ENCODE measurements at regions of chr15 and their contacts with region 1.

Region 1: DNA sequence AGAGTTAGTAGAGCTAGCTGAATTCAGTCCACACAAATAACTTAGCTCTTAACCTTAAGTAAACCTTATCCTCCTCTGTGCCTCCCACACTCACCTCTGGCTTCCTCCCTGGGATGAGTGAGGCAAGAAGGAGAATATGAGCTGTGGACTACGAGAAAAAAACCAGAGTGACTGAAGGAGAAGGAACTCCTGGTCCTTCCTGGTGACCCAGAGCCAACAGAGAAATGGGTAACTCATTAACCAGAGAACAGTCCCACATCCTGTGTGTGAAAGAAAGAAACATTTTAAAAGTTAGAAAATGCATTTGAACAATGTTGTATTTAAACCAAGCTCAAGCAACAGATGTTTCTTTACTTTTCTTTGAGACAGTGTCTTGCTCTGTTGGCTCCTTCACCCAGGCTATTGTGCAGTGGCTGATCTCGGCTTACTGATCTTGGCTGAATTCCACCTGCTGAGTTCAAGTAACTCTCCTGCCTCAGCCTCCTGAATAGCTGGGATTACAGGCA is 27.5 kb upstream of the FAM81A start:
- DNase-seq: no peak
- ATAC-seq: no peak
- H3K4me3 Mint-ChIP-seq: peak overlapping the region; percentile 73
- H3K27ac Mint-ChIP-seq: peak overlapping the region; percentile 98
- H3K4me1 Mint-ChIP-seq: peaks cover 84% of the 10 kb centered on the region
- H3K27me3 Mint-ChIP-seq: no peaks in the 10 kb centered on the region
- CTCF ChIP-seq: no peak

Region 2: GRCh38 chr15:58632789-58633188 is 777.7 kb before region 1 on chr15:
- CTCF ChIA-PET with region 1: no interaction called
- POLR2A ChIA-PET with region 1: no interaction called
- intact Hi-C with region 1: no loop called
- DNase-seq: no peak
- ATAC-seq: no peak
- H3K4me3 Mint-ChIP-seq: no peak overlapping the region
- H3K27ac Mint-ChIP-seq: no peak overlapping the region
- H3K4me1 Mint-ChIP-seq: peaks cover 16% of the 10 kb centered on the region
- H3K27me3 Mint-ChIP-seq: no peaks in the 10 kb centered on the region
- CTCF ChIP-seq: no peak

Region 3: DNA sequence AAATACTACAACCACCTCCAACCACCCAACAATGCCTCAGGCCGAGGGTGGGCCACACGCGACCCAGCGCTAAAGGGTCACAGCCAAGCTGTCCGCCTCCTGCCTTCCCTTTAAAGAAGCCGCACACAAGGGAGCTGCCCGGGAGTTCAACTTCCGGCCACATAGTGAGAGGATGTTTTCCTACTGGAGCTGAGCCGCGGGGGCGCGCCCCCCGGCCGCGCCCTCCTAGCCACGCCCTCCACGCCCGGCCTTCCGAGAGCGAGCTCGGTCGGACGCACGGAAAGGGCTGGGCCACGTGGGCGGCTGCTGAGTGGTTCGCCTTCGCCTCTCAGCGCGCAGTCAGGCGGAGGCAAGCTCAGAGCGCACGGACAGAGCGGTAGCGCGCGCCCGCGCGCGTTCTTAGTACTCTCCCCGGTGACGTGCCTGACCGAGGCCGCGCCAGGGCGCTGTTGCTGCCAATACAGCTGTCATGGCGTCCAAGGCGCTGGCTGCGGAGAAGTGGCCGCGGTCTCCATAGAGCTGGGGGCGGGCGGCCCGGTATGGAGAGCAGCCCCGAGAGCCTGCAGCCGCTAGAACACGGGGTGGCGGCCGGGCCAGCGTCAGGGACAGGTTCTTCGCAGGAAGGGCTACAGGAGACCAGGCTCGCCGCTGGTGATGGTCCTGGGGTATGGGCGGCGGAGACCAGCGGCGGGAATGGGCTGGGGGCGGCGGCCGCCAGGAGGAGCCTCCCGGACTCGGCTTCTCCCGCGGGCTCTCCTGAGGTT is 639.4 kb before region 1 on chr15 and contains the start of gene MINDY2:
- CTCF ChIA-PET with region 1: no interaction called
- POLR2A ChIA-PET with region 1: no interaction called
- intact Hi-C with region 1: loop called (anchors 10 kb)
- DNase-seq: peak; percentile 89
- ATAC-seq: peak; percentile 94
- H3K4me3 Mint-ChIP-seq: peak within 1 kb of the TSS; percentile 93
- H3K27ac Mint-ChIP-seq: peak within 1 kb of the TSS; percentile 96
- H3K4me1 Mint-ChIP-seq: peaks cover 6% of the 10 kb centered on the region
- H3K27me3 Mint-ChIP-seq: no peaks in the 10 kb centered on the region
- CTCF ChIP-seq: no peak
- total RNA-seq, gene MINDY2: 5.8 and 6.2 TPM in 2 replicates

Region 4: DNA sequence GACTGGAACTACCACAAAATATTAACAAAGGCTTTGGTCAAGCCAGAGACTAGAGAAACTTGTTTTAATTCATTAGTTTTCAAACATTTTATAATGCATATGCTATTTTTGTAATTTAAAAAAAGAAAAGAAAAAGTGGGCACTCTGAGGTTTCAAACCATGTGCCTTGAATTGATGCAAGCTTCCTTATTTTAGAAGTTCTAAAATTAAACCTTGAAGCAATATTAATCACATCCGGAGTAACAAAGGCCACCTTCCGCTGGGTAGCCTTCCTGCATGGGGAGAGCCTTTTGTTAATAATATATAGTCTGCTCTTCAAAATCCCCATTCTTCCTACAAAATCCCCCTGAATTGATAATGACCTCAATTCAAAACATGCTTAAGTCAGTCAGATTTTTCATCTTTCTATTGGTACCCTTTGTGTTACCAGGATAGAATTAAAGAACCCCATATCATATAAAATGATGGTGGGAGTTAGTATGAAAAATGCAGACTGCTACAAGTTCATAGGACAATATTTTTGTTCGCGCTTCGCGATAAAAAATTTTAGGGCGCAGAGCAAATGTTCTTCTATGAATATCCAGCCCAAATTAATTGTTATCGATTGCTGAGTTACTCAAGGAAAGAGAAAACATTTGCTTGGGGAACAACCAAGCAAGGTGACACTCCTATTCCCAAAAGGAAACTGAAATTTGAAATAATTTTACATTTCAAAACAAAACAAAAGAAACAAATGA is 173.2 kb before region 1 on chr15:
- CTCF ChIA-PET with region 1: interaction called, 5 read pairs
- POLR2A ChIA-PET with region 1: interaction called, 5 read pairs
- intact Hi-C with region 1: loop called (anchors 1 kb)
- DNase-seq: no peak
- ATAC-seq: peak; percentile 84
- H3K4me3 Mint-ChIP-seq: peak overlapping the region; percentile 48
- H3K27ac Mint-ChIP-seq: peak overlapping the region; percentile 88
- H3K4me1 Mint-ChIP-seq: peaks cover 46% of the 10 kb centered on the region
- H3K27me3 Mint-ChIP-seq: no peaks in the 10 kb centered on the region
- CTCF ChIP-seq: no peak

Region 5: DNA sequence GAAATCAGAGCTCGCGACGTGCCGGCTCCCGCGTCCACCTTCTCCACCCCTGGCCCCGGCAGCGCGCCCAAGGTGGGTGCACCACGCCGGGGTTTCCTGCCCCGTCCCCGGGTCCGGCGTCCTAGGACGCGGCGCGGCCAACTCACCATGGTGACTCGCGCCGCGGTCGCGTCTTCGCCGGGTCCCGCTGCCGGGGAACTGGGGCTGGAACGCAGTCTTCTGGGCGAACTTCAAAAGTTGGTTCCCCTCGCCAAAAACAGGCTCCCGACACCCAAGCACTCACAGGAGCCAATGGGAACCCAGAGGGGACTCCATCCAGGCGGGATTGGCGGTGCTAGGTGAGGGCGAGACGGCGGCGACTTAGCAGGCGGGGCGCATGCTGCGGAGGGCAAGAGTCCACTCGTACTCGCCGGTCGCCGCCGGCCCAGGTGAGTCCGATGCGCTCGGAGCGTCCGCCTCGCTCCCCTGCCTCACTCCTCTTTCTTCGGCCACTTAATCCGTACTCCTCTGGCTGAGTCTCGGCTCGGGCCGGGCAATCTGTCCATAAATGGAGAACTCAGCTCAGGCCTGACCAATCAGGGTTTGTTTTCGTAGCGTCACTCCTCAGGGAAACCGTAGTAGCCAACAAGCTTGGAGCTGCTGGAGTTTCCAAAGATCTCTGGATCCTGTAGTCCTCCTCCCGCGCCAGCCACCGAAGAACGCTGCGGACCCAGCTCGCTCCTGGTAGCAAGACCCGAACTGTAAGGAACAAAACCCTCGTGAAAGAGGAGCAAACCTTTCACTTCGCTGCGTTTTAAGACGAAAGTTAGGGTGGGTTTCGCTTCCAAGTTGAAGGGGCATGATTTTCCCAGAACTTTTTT is 37.9 kb before region 1 on chr15 and contains the start of gene MYO1E:
- CTCF ChIA-PET with region 1: interaction called, 11 read pairs
- POLR2A ChIA-PET with region 1: interaction called, 23 read pairs
- intact Hi-C with region 1: loop called (anchors 1 kb)
- DNase-seq: peak; percentile 54
- ATAC-seq: peak; percentile 62
- H3K4me3 Mint-ChIP-seq: peak within 1 kb of the TSS; percentile 96
- H3K27ac Mint-ChIP-seq: peak within 1 kb of the TSS; percentile 89
- H3K4me1 Mint-ChIP-seq: peaks cover 64% of the 10 kb centered on the region
- H3K27me3 Mint-ChIP-seq: no peaks in the 10 kb centered on the region
- CTCF ChIP-seq: no peak
- total RNA-seq, gene MYO1E: 185 and 186 TPM in 2 replicates

Region 6: GRCh38 chr15:59420986-59421618 is 10.7 kb after region 1 on chr15:
- CTCF ChIA-PET with region 1: interaction called, 4 read pairs
- POLR2A ChIA-PET with region 1: interaction called, 14 read pairs
- intact Hi-C with region 1: no loop called
- DNase-seq: no peak
- ATAC-seq: no peak
- H3K4me3 Mint-ChIP-seq: no peak overlapping the region
- H3K27ac Mint-ChIP-seq: no peak overlapping the region
- H3K4me1 Mint-ChIP-seq: peaks cover 57% of the 10 kb centered on the region
- H3K27me3 Mint-ChIP-seq: no peaks in the 10 kb centered on the region
- CTCF ChIP-seq: no peak

Region 7: GRCh38 chr15:59484399-59484798 is 74.0 kb after region 1 on chr15:
- CTCF ChIA-PET with region 1: interaction called, 6 read pairs
- POLR2A ChIA-PET with region 1: interaction called, 12 read pairs
- intact Hi-C with region 1: loop called (anchors 1 kb)
- DNase-seq: no peak
- ATAC-seq: no peak
- H3K4me3 Mint-ChIP-seq: no peak overlapping the region
- H3K27ac Mint-ChIP-seq: no peak overlapping the region
- H3K4me1 Mint-ChIP-seq: peaks cover 12% of the 10 kb centered on the region
- H3K27me3 Mint-ChIP-seq: no peaks in the 10 kb centered on the region
- CTCF ChIP-seq: no peak

Region 8: GRCh38 chr15:59521443-59521842 is 111.0 kb after region 1 on chr15:
- CTCF ChIA-PET with region 1: no interaction called
- POLR2A ChIA-PET with region 1: no interaction called
- intact Hi-C with region 1: no loop called
- DNase-seq: no peak
- ATAC-seq: peak; percentile 3
- H3K4me3 Mint-ChIP-seq: peak overlapping the region; percentile 64
- H3K27ac Mint-ChIP-seq: peak overlapping the region; percentile 85
- H3K4me1 Mint-ChIP-seq: peaks cover 77% of the 10 kb centered on the region
- H3K27me3 Mint-ChIP-seq: no peaks in the 10 kb centered on the region
- CTCF ChIP-seq: no peak

Measured in activated B cell treated with CpG ODN at 0.5 μM for 24 hours (primary cell).